ENCODE measurements at regions of chr10 and their contacts with region 1.

Region 1: GRCh38 chr10:117555017-117555416 is 12.5 kb downstream of the EMX2 start:
- DNase-seq: peak; percentile 60

Region 2: DNA sequence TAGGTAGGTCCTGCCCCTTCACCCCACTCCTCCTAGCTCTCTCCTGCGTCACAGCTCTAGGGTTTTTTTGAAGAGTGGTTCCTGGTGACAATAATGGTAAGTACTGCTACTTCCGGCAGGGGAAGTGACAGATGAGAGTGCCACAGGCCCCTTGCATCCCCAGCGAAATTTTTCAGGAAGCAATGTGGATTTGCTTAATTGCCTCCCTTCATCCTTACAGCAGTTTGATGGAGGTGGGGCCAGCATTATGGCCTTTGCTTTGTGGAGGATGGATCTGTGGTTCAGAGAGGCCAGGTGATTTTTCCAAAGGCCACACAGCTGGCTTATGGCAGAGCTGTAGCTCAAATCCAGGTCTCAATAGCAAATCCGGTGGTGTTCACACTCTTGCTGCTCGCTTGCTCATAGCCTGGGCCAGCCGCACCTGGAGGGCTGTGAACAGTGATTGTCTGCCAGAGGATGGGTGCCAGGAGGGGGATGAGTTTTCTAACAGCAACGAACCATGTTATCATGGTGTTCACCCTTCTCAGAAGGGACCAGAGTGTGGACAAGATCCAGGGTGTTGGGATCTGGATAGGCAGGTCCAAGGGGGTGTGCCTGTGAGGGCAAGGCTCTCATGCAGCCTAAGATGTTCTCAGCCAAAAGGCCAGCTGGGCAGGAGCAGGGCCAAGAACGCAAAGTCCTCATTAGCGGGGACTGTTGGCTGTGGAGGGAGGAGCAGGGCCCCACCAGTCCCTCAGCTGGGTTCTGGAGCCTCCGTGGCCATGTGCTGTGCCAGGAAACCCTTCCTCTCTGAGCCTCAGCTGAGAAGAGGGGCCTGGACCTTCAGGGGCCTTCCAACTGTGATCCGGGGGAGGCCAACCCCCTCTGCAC is 76.5 kb after region 1 on chr10:
- intact Hi-C with region 1: no loop called
- DNase-seq: no peak

Region 3: GRCh38 chr10:117677890-117678500 is 123.0 kb after region 1 on chr10:
- intact Hi-C with region 1: loop called in 1 of 2 experiments (anchors 5 kb)
- DNase-seq: no peak

Measured in posterior vena cava (tissue), 2 donors.